Mammary epithelial cell (primary cell): ENCODE measurements at regions of chr1 and their contacts with region 1.

Region 1: GRCh38 chr1:66764994-66765578 is 12.8 kb downstream of the DYNLT5 start:
- DNase-seq: peak; percentile 25
- H3K4me3 ChIP-seq: no peak overlapping the region
- H3K27ac ChIP-seq: no peak overlapping the region
- H3K4me1 ChIP-seq: no peaks in the 10 kb centered on the region
- H3K27me3 ChIP-seq: peaks cover 2% of the 10 kb centered on the region
- CTCF ChIP-seq: peak; percentile 69 to 71

Region 2: DNA sequence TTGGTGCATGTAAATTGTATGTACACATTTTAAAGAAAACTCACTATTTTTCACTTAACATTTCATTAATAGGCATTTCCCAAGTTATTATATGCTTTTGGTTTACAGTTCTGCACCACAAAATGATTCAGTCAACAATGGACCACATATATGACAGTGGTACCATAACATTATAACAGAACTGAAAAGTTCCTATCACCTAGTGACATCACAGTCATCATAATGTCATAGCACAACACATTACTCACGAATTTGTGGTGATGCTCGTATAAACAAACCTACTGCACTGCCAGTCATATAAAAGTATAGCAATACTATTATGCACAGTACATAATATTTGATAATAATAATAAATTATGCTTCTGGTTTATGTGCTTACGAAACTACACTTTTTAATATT is 128.6 kb after region 1 on chr1:
- CTCF ChIA-PET with region 1: no interaction called
- dilution Hi-C with region 1: no loop called
- in situ Hi-C with region 1: no loop called
- intact Hi-C with region 1: no loop called
- DNase-seq: no peak
- H3K4me3 ChIP-seq: no peak overlapping the region
- H3K27ac ChIP-seq: no peak overlapping the region
- H3K4me1 ChIP-seq: no peaks in the 10 kb centered on the region
- H3K27me3 ChIP-seq: no peaks in the 10 kb centered on the region
- CTCF ChIP-seq: no peak

Region 3: DNA sequence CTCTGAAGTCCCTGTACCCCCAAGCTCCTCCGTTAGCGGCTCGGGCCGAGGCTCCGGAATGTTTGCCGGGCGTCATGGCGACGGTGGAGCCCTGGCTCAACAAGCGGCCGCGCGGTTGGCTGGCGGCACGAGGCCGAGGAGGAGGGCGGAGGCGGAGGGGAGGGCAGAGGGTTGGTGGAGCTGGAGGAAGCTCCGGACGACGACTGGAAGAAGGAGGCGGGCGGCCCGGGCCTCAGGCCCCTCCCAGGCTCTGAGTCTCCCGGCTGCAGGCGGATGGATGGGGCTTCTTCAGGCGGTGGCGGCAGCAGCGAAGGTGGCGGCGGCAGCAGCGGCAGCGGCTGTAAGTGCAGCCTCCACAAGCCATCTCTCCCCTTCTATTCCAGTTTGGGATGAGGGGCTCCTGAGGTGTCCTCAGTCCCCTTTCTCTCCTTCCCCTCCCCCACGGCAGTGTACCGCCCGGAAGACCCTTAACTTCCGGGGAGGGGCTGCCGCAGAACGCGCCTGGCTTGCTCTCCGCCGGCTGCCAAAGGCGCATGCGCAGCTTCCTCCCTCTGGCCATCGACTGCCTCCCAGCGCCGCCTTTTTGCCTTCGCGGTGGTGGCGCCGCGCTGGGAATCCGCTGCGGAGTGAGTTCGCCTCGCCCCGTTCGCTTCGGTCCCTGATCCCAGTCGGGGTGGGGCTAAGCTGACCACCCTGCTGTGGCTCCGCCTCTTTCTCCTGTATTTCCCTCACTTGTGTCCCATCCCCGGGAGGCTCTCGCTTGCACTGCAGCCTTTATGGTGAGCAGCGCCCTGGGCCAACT is 159.9 kb after region 1 on chr1 and contains the starts of genes DNAI4 and MIER1:
- CTCF ChIA-PET with region 1: no interaction called
- dilution Hi-C with region 1: no loop called
- in situ Hi-C with region 1: no loop called
- intact Hi-C with region 1: loop called (anchors 2 kb)
- DNase-seq: peak; percentile 99
- H3K4me3 ChIP-seq: peak within 1 kb of the TSS; percentile 65 to 99 (median 86)
- H3K27ac ChIP-seq: peak within 1 kb of the TSS; percentile 99
- H3K4me1 ChIP-seq: peaks cover 15% of the 10 kb centered on the region
- H3K27me3 ChIP-seq: no peaks in the 10 kb centered on the region
- CTCF ChIP-seq: peak in 1 of 2 donors; percentile 33
- total RNA-seq, gene DNAI4: 2.9 to 6.0 TPM
- total RNA-seq, gene MIER1: 33.0 to 35.7 TPM

Region 4: DNA sequence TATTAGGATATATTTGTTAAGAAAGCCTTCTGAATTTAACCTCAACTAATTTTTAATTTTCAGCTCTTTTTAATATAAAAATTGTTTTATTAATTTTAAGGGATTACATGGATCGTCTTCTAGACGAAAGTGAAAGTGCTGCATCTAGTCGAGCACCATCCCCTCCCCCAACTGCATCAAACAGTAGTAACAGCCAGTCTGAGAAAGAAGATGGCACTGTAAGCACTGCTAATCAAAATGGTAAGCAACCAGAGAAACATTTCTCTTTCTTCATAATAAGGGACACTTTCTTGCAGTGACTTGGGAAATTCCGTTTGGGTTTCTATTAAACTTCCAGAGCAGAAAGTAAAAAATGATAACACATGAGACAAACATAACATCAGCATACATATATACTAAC is 216.6 kb after region 1 on chr1:
- CTCF ChIA-PET with region 1: no interaction called
- dilution Hi-C with region 1: no loop called
- in situ Hi-C with region 1: loop called in 1 of 2 experiments (anchors 25 kb)
- intact Hi-C with region 1: loop called (anchors 5 kb)
- DNase-seq: peak; percentile 24
- H3K4me3 ChIP-seq: no peak overlapping the region
- H3K27ac ChIP-seq: no peak overlapping the region
- H3K4me1 ChIP-seq: no peaks in the 10 kb centered on the region
- H3K27me3 ChIP-seq: no peaks in the 10 kb centered on the region
- CTCF ChIP-seq: no peak

Region 5: GRCh38 chr1:66996018-66996682 is 231.1 kb after region 1 on chr1:
- CTCF ChIA-PET with region 1: no interaction called
- dilution Hi-C with region 1: no loop called
- in situ Hi-C with region 1: loop called in 1 of 2 experiments (anchors 25 kb)
- intact Hi-C with region 1: loop called (anchors 1 kb)
- DNase-seq: peak; percentile 54
- H3K4me3 ChIP-seq: no peak overlapping the region
- H3K27ac ChIP-seq: no peak overlapping the region
- H3K4me1 ChIP-seq: no peaks in the 10 kb centered on the region
- H3K27me3 ChIP-seq: no peaks in the 10 kb centered on the region
- CTCF ChIP-seq: peak; percentile 86 to 87

Region 6: GRCh38 chr1:67149179-67149770 is 384.2 kb after region 1 on chr1:
- CTCF ChIA-PET with region 1: interaction called, 4 read pairs
- dilution Hi-C with region 1: no loop called
- in situ Hi-C with region 1: loop called (anchors 25 kb)
- intact Hi-C with region 1: loop called (anchors 1 kb)
- DNase-seq: peak; percentile 75
- H3K4me3 ChIP-seq: no peak overlapping the region
- H3K27ac ChIP-seq: peak overlapping the region; percentile 13
- H3K4me1 ChIP-seq: peaks cover 23% of the 10 kb centered on the region
- H3K27me3 ChIP-seq: no peaks in the 10 kb centered on the region
- CTCF ChIP-seq: peak; percentile 84 to 93

Region 7: DNA sequence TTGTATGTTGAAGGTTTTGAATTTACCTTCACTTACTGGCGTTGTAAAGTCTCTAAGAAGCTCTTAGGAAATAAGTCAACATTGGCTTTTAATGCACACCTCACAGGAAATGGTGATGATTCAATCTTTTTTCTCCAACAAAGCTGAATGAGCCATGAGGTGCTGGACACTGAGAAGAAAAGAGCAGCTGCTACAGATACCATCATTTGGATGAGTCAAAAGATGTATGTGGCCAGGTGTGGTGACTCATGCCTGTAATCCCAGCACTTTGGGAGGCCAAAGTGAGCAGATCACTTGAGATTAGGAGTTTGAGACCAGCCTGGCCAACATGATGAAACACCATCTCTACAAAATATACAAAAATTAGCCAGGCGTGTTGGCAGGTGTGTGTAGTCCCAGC is 397.9 kb after region 1 on chr1:
- CTCF ChIA-PET with region 1: no interaction called
- dilution Hi-C with region 1: no loop called
- in situ Hi-C with region 1: loop called in 1 of 2 experiments (anchors 25 kb)
- intact Hi-C with region 1: no loop called
- DNase-seq: peak; percentile 98
- H3K4me3 ChIP-seq: no peak overlapping the region
- H3K27ac ChIP-seq: peak overlapping the region; percentile 45
- H3K4me1 ChIP-seq: peaks cover 13% of the 10 kb centered on the region
- H3K27me3 ChIP-seq: no peaks in the 10 kb centered on the region
- CTCF ChIP-seq: no peak

Region 8: DNA sequence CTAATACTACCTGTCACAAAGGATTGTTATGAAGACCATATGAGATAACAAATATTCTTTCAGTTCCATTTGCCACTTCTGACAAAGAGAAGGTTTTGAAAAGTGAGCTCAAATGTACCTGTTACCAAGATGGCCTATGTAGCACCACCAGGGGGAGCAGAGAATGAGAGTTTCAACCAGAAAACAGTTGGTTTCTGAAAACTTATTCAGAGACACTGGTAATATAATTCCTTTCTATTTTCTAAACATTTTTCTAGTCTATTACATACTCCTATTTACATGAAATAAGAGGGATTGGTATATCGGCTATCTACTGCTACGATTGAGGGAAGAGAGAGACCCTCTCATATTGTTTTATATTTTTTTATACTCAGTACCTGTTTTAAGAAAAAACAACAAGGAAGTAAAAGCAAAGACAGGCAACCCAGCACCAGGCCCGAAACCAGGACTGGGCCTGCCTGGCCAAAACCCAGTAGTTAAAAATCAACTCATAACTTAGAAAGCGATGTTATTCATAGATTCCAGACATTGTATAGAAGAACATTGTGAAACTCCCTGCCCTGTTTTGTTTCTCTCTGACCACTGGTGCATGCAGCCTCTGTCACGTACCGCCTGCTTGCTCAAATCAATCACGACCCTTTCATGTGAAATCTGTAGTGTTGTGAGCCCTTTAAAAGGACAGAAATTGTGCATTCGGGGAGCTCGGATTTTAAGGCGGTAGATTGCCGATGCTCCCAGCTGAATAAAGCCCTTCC is 449.5 kb after region 1 on chr1:
- CTCF ChIA-PET with region 1: interaction called, 5 read pairs
- dilution Hi-C with region 1: no loop called
- in situ Hi-C with region 1: no loop called
- intact Hi-C with region 1: loop called (anchors 1 kb)
- DNase-seq: peak; percentile 38
- H3K4me3 ChIP-seq: no peak overlapping the region
- H3K27ac ChIP-seq: no peak overlapping the region
- H3K4me1 ChIP-seq: peaks cover 3% of the 10 kb centered on the region
- H3K27me3 ChIP-seq: no peaks in the 10 kb centered on the region
- CTCF ChIP-seq: peak; percentile 54 to 71